Right cardiac atrium (tissue), 5 donors: ENCODE measurements at regions of chrX and their contacts with region 1.

Region 1: GRCh38 chrX:74382613-74383012 is 38.7 kb upstream of the SLC16A2 start:
- DNase-seq: peak; percentile 55 to 82 (median 67)
- ATAC-seq: peak; percentile 83 to 89
- H3K4me3 ChIP-seq: no peak overlapping the region
- H3K27ac ChIP-seq: no peak overlapping the region
- H3K4me1 ChIP-seq: no peaks in the 10 kb centered on the region
- H3K27me3 ChIP-seq: no peaks in the 10 kb centered on the region

Region 2: GRCh38 chrX:74119016-74119910 is 263.4 kb before region 1 on chrX:
- intact Hi-C with region 1: no loop called
- DNase-seq: no peak
- ATAC-seq: no peak
- H3K4me3 ChIP-seq: no peak overlapping the region
- H3K27ac ChIP-seq: no peak overlapping the region
- H3K4me1 ChIP-seq: no peaks in the 10 kb centered on the region
- H3K27me3 ChIP-seq: no peaks in the 10 kb centered on the region

Region 3: GRCh38 chrX:74449329-74449936 is 66.8 kb after region 1 on chrX:
- intact Hi-C with region 1: loop called in 1 of 4 experiments (anchors 10 kb)
- DNase-seq: no peak
- ATAC-seq: no peak
- H3K4me3 ChIP-seq: no peak overlapping the region
- H3K27ac ChIP-seq: no peak overlapping the region
- H3K4me1 ChIP-seq: peaks cover 1% of the 10 kb centered on the region
- H3K27me3 ChIP-seq: no peaks in the 10 kb centered on the region

Region 4: GRCh38 chrX:74536152-74536831 is 153.7 kb after region 1 on chrX:
- intact Hi-C with region 1: loop called in 1 of 4 experiments (anchors 10 kb)
- DNase-seq: peak; percentile 91 to 95 (median 94)
- ATAC-seq: peak; percentile 94 to 96
- H3K4me3 ChIP-seq: peak overlapping the region; percentile 53
- H3K27ac ChIP-seq: peak overlapping the region; percentile 86
- H3K4me1 ChIP-seq: no peaks in the 10 kb centered on the region
- H3K27me3 ChIP-seq: no peaks in the 10 kb centered on the region

Region 5: DNA sequence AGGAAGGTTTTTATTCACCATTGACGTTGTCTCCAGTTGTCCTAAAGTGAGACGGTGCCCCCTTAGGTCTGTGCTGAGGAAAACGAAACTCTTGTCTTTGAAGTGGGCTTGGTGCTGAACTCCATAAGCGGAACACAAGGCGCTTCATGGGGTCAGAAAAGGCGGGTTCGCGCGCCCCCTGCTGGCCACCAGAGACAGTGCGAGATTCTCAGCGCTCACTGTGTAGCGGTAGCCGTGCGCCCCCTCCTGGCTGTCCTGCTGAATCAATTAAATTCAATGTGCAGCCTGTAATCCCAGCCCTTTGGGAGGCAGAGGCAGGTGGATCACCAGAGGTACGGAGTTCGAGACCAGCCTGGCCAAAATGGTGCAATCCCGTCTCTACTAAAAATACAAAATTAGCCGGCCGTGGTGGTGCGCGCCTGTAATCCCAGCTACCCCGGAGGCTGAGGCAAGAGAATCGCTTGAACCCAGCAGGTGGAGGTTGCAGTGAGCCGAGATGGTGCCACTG is 167.7 kb after region 1 on chrX:
- intact Hi-C with region 1: loop called in 3 of 4 experiments (anchors 2 to 10 kb)
- DNase-seq: peak; percentile 82 to 93 (median 93)
- ATAC-seq: peak; percentile 90 to 94
- H3K4me3 ChIP-seq: peak overlapping the region; percentile 15
- H3K27ac ChIP-seq: no peak overlapping the region
- H3K4me1 ChIP-seq: no peaks in the 10 kb centered on the region
- H3K27me3 ChIP-seq: no peaks in the 10 kb centered on the region